Activated CD4-positive, alpha-beta T cell treated with anti-CD3 and anti-CD28 coated beads for 36 hours (primary cell): ENCODE measurements at regions of chr10 and their contacts with region 1.

Region 1: DNA sequence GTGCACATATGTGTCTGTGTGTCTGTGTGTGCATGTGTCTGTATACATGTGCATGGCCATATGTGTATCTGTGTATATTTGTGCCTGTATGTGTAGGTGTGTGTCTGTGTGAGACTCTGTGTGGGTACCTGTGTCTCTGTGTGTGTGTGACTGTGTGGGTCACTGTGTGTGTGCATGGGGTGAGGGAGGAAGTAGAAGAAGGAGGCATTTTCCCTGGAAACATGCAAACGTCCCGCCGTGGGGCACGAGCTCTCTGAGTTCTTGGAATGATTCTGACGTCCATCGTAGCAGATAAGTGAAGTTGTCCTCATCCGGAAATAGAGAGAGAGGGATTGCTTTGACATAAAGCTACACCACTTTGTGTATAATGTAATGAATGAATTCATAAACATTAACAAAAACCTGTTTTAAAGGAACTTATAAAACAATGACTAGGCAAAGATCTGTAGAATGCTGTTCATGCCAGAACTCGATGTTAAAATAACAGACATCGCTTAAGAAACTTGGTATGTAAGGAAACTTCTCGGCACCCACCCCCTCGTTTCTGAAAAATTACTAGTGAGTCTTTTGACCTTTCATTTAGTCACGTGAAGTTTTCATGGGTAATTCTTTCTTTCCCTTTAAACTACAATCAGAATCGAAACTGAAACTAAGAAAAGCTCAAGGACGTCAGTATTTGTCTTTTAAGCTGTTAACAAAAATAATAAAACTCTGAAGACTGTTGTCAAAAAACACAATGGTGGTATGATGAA is 43.6 kb upstream of the KLF6 start:
- DNase-seq: peak; percentile 77
- ATAC-seq: peak; percentile 62
- H3K4me3 Mint-ChIP-seq: peak overlapping the region; percentile 56
- H3K27ac Mint-ChIP-seq: peak overlapping the region; percentile 98
- H3K4me1 Mint-ChIP-seq: peaks cover 63% of the 10 kb centered on the region
- H3K27me3 Mint-ChIP-seq: no peaks in the 10 kb centered on the region

Region 2: DNA sequence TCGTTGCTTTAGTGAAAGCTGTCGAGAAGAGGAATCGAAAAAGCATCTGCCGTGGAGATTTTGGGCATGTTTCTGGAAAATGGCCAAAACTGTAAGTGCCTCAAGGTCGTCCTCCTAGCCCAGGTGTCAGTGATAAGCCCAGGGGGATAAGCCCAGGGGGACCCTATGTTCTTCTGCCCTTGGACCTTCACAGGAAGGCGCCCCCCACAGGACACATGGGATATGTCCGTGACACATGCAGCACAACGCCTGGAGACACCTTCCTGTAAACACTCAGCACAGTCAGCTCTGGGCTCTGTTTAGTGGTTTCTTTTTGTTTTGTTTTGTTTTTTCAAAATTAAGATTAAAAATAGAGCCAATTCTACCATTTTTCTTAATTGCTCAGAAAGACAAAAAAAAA is 316.3 kb before region 1 on chr10:
- CTCF ChIA-PET with region 1: no interaction called
- POLR2A ChIA-PET with region 1: no interaction called
- intact Hi-C with region 1: no loop called
- DNase-seq: no peak
- ATAC-seq: no peak
- H3K4me3 Mint-ChIP-seq: no peak overlapping the region
- H3K27ac Mint-ChIP-seq: no peak overlapping the region
- H3K4me1 Mint-ChIP-seq: peaks cover 2% of the 10 kb centered on the region
- H3K27me3 Mint-ChIP-seq: peaks cover 5% of the 10 kb centered on the region

Region 3: DNA sequence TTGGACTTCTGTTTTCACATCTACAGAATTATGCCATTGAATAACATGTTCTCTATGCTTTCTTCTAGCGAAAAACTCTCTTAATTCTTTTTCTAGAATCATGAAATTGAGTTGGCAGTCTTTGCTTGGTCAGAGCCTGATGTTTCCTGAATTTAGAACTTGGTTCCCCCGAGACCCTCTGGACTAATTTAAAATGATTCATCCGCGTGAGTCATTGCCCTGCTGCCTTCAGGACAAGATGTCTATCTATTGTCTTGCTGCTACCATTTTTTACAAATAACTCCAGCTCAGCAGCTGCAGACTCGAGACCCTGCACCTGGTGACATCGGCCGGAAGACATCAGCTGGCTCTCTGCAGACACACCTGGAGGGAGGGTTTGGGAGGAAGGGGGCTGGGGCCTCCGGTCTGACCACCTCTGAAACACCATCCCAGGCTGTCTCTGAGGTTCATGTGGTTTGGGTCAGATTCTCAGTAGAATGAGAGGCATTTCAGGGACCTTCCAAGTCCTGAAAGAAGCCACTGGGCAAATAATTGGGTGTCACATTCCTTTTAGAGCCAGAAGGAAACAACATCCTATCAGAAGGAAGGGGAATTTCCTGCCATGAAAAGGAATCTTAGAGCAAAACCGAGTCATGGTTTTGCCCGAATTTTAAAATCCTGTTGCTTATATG is 22.7 kb before region 1 on chr10:
- CTCF ChIA-PET with region 1: interaction called, 3 read pairs
- POLR2A ChIA-PET with region 1: interaction called, 26 read pairs
- intact Hi-C with region 1: loop called (anchors 1 kb)
- DNase-seq: peak; percentile 59
- ATAC-seq: no peak
- H3K4me3 Mint-ChIP-seq: peak overlapping the region; percentile 46
- H3K27ac Mint-ChIP-seq: no peak overlapping the region
- H3K4me1 Mint-ChIP-seq: peaks cover 63% of the 10 kb centered on the region
- H3K27me3 Mint-ChIP-seq: no peaks in the 10 kb centered on the region